BJ (cell line): ENCODE measurements at regions of chr7 and their contacts with region 1.

Region 1: DNA sequence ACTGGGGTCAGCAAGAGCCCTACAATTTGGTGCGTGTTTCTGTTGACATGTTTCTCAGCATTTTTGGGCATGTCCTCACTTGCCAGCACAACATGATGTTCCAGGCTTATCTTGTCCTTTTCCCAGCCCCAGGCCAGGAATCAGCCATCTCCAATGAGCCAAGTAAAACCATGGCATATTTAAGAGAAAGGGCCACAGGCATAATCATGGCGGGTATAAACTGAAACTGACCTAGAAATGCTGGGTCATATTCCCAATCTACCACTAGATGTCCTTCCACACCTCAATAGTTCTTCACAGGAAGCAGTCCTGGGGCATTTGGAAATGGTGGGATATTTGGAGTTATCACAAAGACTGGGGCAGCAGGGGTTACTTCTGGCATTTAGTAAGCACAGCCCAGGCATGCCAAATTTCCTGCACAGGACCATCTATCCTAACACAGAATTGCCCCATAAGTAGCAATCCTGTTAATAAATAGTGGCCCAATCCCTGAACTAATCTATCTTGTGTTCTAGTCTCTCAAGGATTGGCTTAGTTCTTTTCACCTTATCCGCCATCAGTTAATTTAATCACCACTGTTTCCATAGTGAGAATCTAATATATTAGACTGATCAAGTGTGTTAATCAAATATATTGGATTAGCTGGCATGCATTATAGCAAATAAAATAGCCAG is 101.6 kb downstream of the NPSR1 start:
- DNase-seq: no peak
- H3K4me3 ChIP-seq: no peak overlapping the region
- H3K27me3 ChIP-seq: no peaks in the 10 kb centered on the region
- CTCF ChIP-seq: peak; percentile 71

Region 2: DNA sequence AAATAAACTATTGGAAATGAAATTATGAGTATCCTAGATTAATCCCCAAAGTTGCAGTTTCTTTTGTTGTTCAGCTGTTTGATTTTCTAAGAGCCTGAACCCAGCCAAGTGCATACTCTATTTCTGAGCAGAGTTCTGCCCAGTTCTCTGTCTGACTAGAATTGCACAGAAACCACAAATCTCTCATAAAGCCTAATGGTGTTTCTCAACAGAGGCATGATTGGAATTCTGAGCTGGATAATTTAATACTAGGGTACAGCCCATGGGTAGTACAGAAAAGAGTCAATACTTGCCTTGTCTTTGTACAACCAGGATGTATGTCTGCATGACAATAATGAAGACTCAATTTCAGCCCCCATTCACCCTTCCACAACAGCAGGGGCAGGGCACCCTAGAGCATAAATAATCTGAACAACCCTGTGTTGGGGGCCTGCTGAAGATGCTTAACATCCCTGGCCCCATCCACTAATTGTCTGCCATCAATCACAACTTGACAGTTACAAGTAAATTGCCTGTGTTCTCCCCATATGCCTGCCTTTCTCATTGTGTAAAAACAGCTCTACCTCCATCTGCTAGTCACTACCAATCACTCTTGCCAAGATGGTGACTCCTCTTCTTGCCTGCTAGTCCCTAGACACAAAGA is 12.8 kb after region 1 on chr7:
- CTCF ChIA-PET with region 1: interaction called, 17 read pairs
- POLR2A ChIA-PET with region 1: no interaction called
- DNase-seq: no peak
- H3K4me3 ChIP-seq: no peak overlapping the region
- H3K27me3 ChIP-seq: no peaks in the 10 kb centered on the region
- CTCF ChIP-seq: no peak

Region 3: DNA sequence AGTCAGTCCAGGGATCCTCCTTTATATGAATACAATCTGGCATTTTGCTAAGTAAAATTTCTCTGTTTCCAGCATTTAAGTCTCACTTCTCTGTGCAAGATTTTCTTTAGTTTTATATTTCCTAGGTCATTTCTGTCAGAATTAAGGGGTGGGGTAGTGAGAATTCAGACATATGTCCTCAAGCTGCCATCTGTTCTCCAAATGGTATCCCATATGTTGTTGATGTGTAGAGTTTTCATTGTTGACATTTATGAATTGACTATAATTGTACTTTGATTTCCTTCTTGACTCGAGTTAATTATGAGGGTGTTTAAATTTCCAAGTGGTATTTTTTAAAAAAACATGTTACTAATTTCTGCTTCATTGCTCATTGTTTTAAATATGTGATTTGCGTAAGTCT is 47.2 kb after region 1 on chr7:
- CTCF ChIA-PET with region 1: no interaction called
- POLR2A ChIA-PET with region 1: no interaction called
- DNase-seq: no peak
- H3K4me3 ChIP-seq: no peak overlapping the region
- H3K27me3 ChIP-seq: no peaks in the 10 kb centered on the region
- CTCF ChIP-seq: no peak